ENCODE measurements at regions of chr7 and their contacts with region 1.

Region 1: DNA sequence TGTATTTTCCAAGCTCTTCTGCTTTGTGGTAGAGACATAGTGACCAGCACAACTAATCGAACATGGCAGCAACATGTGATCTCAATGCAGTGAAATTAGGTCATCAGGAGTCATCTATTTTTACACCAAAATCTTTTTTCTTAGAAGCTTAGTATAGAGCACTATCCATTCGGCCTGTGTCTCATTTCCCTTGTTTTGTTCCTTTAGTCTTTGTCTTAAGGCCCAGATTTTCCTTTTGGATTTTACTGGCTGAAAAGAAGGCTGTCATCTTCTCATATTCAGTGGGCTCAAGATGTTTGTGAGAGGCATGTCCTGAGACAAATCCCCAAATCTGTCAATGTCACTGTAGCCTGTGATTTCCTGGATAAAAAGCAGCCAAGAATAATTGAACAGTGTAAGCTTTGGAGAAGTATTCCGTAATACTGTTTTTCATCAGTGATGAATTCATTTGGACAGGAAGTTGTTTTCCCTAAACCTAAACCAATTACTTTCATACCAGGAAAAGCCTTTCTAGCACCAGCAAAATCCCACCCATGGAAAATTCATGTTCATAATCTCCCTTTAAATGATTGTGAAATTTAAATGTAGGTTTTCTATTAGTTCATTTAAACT is 55.2 kb downstream of the MAGI2 start:
- DNase-seq: no peak
- ATAC-seq: no peak
- H3K4me3 ChIP-seq: no peak overlapping the region
- H3K27ac ChIP-seq: peak overlapping the region in 4 of 12 donors; percentile 13 to 41 (median 40)
- H3K4me1 ChIP-seq: peaks cover 0 to 26% (median 5%) of the 10 kb centered on the region in 12 donors
- H3K27me3 ChIP-seq: no peaks in the 10 kb centered on the region
- CTCF ChIP-seq: no peak
- POLR2A ChIP-seq: no peak

Region 2: DNA sequence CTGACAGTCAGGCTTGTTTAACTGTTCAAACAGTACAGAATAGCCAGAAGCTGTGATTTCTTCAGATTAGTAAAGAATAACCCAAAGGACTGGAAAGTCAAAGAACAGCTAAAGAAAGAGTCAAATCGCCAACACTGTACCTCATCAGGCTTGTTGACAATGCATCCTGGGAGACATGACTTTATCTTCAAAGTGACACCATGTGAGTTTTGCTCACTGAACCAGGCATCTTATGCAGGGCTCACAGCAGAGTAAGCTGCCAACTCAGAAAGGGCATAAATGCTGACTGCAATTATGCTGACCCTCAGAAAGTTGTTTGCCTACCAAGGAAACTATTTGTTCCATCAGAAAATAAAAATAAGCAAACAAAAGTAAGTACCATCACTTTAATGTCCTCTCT is 41.1 kb before region 1 on chr7:
- intact Hi-C with region 1: loop called in 1 of 10 experiments (anchors 5 kb)
- DNase-seq: no peak
- ATAC-seq: peak in 3 of 4 donors; percentile 37 to 61 (median 41)
- H3K4me3 ChIP-seq: no peak overlapping the region
- H3K27ac ChIP-seq: no peak overlapping the region
- H3K4me1 ChIP-seq: peaks cover 0 to 13% (median 0%) of the 10 kb centered on the region in 12 donors
- H3K27me3 ChIP-seq: no peaks in the 10 kb centered on the region
- CTCF ChIP-seq: no peak
- POLR2A ChIP-seq: no peak